ENCODE measurements at regions of chr12 and their contacts with region 1.

Region 1: DNA sequence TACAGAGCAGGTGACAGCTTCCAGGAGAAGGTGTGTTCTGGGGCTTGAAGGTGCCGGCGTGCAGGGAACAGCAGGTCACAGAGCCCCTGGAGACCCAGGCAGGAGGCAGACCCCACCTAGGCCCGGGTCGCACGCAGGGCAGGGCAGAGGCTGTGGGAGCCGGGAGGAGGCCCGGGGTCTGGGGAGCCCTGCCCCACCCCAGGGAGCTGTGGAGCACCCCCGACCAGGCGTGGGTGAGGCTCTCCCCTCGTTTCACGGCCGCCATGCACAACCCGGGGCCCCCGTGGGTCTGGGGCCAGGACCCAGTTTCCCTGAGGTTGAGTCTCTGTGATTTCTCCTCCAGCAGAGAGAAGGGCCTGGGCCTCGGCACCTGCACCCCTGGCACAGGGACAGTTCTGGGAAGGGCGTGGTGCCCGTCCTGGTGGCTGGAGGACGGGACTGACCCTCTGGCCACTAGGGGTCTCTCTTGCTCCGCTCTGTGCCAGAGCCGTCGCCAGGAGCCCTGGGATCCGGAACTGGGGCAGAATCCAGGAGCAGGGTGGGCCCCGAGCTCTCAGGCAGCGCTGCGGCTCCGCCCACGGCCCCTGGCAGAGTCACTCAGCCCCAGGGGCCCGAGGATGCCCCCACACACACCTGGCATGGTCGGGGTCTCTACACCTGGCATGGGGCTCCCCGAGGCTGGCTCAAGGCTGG is 75.2 kb upstream of the FBRSL1 start:
- DNase-seq: peak; percentile 27
- ATAC-seq: peak; percentile 95
- H3K4me3 ChIP-seq: peak overlapping the region in 1 of 2 experiments; percentile 37; a peak in 2 of 4 replicates
- H3K27ac ChIP-seq: no peak overlapping the region
- H3K4me1 ChIP-seq: peaks cover 14% of the 10 kb centered on the region
- H3K27me3 ChIP-seq: no peaks in the 10 kb centered on the region; the same call in 1 of the 2 replicates
- CTCF ChIP-seq: peak; percentile 92

Region 2: DNA sequence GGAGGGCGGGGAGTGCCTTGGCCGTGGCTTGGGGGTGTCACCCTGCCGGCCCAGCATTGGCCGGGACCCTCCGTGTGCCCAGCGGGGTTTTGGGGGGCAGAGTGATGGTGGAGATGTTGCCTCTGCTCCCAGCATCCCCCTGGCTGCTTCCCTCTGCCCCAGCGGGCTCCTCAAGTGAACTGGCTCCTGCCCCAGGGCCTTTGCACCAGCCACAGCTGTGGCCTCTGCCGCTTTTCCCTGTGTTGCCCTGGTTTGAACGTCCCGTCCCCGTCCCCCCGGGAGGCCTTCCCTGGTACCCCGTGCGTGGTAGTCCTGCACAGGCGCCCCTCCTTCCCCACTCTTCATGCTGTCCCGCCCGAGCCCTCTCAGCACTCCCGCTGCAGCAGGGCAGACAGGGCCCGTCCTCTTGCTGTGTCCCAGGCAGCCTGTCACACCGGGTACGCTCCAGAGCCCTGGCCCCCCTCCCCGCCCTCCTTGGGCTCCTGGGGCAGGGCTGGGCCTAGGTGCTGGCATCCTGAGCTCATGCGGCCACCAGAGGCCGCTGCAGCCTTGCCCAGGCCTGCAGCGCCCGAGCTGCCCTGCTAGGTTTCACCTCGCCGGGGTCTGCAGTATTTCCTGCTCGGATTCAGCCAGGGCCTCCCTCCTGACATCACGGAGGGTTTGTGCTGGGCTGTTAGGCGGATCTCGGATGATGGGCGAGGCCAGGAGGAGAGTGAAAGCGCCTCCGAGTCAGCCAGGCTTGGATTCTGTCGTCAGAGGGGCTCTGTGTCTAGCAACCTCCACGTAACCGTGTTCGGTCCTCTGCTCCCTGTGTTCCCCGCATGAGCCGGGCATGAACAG is 261.1 kb before region 1 on chr12:
- CTCF ChIA-PET with region 1: interaction called, 13 read pairs
- POLR2A ChIA-PET with region 1: no interaction called
- in situ Hi-C with region 1: no loop called
- intact Hi-C with region 1: loop called (anchors 10 kb)
- DNase-seq: no peak
- ATAC-seq: peak; percentile 96
- H3K4me3 ChIP-seq: no peak overlapping the region
- H3K27ac ChIP-seq: no peak overlapping the region
- H3K4me1 ChIP-seq: no peaks in the 10 kb centered on the region
- H3K27me3 ChIP-seq: no peaks in the 10 kb centered on the region
- CTCF ChIP-seq: peak; percentile 98

Region 3: DNA sequence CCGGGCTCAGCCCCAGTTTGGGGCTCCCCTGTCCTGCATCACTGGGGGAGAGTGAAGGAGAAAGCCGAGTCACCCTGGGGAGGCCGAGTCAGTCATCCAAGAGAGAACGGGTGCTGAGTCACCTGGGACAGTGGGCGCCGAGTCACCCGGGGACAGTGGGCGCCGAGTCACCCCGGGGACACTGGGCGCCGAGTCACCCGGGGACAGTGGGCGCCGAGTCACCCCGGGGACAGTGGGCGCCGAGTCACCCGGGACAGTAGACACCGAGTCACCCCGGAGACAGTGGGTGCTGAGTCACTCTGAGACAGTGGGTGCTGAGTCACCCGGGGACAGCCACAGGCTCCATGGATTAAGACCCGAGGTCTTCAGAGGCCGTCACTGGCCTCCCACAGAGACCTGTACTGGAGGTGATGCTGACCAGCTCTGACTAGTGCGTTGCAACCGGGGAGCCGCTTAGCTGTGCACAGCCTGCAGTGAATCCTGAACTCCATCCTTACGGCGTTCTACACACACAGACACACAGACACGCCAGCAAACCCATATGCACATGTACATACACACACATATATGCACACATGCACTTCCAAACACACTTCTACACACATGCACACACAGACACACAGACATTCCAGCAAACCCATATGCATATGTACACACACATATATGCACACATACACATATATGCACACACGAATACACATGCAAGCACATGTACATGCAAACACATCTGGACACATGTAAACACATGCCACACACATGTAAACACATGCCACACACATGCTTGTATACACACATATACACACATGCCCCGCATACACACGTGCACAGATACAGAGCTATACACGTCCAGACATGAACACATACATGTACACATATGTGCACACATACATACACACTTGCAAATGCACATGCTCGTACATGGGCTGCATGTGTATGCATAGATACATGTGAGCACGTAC is 20.5 kb before region 1 on chr12:
- CTCF ChIA-PET with region 1: no interaction called
- POLR2A ChIA-PET with region 1: no interaction called
- in situ Hi-C with region 1: no loop called
- intact Hi-C with region 1: no loop called
- DNase-seq: no peak
- ATAC-seq: 0 out of 2 replicates have a peak, but pooled peaks have one; percentile 40
- H3K4me3 ChIP-seq: no peak overlapping the region
- H3K27ac ChIP-seq: no peak overlapping the region
- H3K4me1 ChIP-seq: no peaks in the 10 kb centered on the region
- H3K27me3 ChIP-seq: no peaks in the 10 kb centered on the region
- CTCF ChIP-seq: no peak

Region 4: GRCh38 chr12:132445884-132446632 is 31.3 kb after region 1 on chr12:
- CTCF ChIA-PET with region 1: no interaction called
- POLR2A ChIA-PET with region 1: interaction called, 10 read pairs
- in situ Hi-C with region 1: no loop called
- intact Hi-C with region 1: no loop called
- DNase-seq: peak; percentile 83
- ATAC-seq: peak; percentile 92
- H3K4me3 ChIP-seq: peak overlapping the region; percentile 85 to 88
- H3K27ac ChIP-seq: peak overlapping the region; percentile 96
- H3K4me1 ChIP-seq: peaks cover 4% of the 10 kb centered on the region; the same call in 1 of the 2 replicates
- H3K27me3 ChIP-seq: no peaks in the 10 kb centered on the region
- CTCF ChIP-seq: no peak

Region 5: GRCh38 chr12:132560614-132561426 is 146.0 kb after region 1 on chr12:
- CTCF ChIA-PET with region 1: interaction called, 7 read pairs
- POLR2A ChIA-PET with region 1: no interaction called
- in situ Hi-C with region 1: no loop called
- intact Hi-C with region 1: loop called (anchors 2 kb)
- DNase-seq: peak; percentile 5
- ATAC-seq: peak; percentile 77
- H3K4me3 ChIP-seq: peak overlapping the region; percentile 68 to 73
- H3K27ac ChIP-seq: peak overlapping the region; percentile 32; the same call in 1 of the 2 replicates
- H3K4me1 ChIP-seq: peaks cover 13% of the 10 kb centered on the region
- H3K27me3 ChIP-seq: no peaks in the 10 kb centered on the region
- CTCF ChIP-seq: peak; percentile 96

Region 6: GRCh38 chr12:132649206-132649934 is 234.6 kb after region 1 on chr12:
- CTCF ChIA-PET with region 1: interaction called, 10 read pairs
- POLR2A ChIA-PET with region 1: no interaction called
- in situ Hi-C with region 1: no loop called
- intact Hi-C with region 1: no loop called
- DNase-seq: no peak
- ATAC-seq: peak; percentile 29; the same call in 1 of the 2 replicates
- H3K4me3 ChIP-seq: no peak overlapping the region
- H3K27ac ChIP-seq: no peak overlapping the region
- H3K4me1 ChIP-seq: no peaks in the 10 kb centered on the region
- H3K27me3 ChIP-seq: no peaks in the 10 kb centered on the region
- CTCF ChIP-seq: no peak